AG04450 (cell line): ENCODE measurements at regions of chr5 and their contacts with region 1.

Region 1: DNA sequence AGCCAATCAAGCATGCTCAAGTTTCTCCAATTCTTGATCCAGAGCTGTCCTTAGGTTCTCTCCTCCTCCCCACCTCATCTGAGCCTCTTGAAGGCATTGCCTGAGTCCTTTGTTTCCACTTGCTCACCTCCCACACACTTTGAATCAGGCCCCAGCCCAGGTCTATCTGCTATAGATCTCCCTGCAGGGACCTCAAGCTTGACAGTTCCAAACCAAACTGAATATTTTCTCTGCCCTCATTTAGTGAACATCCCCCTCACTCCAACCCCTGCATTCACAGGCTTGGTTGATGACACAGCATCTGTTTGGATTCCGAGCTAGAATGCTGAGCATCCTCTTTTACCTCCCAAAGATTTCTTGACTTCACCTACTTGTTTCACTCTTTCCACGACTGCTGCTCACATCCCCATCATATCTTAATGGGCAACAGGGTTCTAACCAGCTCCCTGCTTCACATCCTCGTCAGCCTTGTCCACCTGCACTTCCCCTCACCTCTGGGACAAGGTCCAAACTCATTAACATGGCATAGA is 474.5 kb downstream of the ZSWIM6 start:
- DNase-seq: no peak
- H3K4me3 ChIP-seq: no peak overlapping the region
- H3K27ac ChIP-seq: no peak overlapping the region
- H3K27me3 ChIP-seq: peaks cover 2% of the 10 kb centered on the region
- CTCF ChIP-seq: no peak

Region 2: DNA sequence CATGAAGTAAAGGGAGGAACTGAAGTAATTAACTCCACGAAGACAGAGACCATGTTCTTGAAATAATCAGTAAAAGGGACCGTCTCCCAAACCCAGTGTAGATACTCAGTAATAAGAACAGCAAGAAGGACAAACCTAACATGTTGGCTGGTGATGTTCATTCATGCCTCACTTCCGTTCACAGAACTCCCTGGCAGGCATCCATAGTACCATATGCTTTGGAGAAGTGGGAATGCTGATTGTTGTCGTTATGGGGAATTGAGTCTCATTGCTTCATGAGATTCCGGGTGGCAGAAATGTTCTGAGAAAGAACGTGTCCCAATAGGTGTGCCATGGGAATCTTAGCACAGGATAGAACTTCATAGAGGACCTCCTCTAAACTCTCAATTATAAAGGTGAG is 22.2 kb before region 1 on chr5:
- CTCF ChIA-PET with region 1: no interaction called
- POLR2A ChIA-PET with region 1: no interaction called
- DNase-seq: no peak
- H3K4me3 ChIP-seq: no peak overlapping the region
- H3K27ac ChIP-seq: no peak overlapping the region
- H3K27me3 ChIP-seq: no peaks in the 10 kb centered on the region
- CTCF ChIP-seq: no peak

Region 3: GRCh38 chr5:61817472-61818326 is 11.1 kb after region 1 on chr5:
- CTCF ChIA-PET with region 1: interaction called, 13 read pairs
- POLR2A ChIA-PET with region 1: no interaction called
- DNase-seq: peak; percentile 11
- H3K4me3 ChIP-seq: no peak overlapping the region
- H3K27ac ChIP-seq: no peak overlapping the region
- H3K27me3 ChIP-seq: no peaks in the 10 kb centered on the region
- CTCF ChIP-seq: peak; percentile 75

Region 4: GRCh38 chr5:62587737-62588136 is 781.2 kb after region 1 on chr5:
- CTCF ChIA-PET with region 1: no interaction called
- POLR2A ChIA-PET with region 1: no interaction called
- DNase-seq: no peak
- H3K4me3 ChIP-seq: no peak overlapping the region
- H3K27ac ChIP-seq: no peak overlapping the region
- H3K27me3 ChIP-seq: no peaks in the 10 kb centered on the region
- CTCF ChIP-seq: no peak